MCF 10A (cell line): ENCODE measurements at regions of chr18 and their contacts with region 1.

Region 1: DNA sequence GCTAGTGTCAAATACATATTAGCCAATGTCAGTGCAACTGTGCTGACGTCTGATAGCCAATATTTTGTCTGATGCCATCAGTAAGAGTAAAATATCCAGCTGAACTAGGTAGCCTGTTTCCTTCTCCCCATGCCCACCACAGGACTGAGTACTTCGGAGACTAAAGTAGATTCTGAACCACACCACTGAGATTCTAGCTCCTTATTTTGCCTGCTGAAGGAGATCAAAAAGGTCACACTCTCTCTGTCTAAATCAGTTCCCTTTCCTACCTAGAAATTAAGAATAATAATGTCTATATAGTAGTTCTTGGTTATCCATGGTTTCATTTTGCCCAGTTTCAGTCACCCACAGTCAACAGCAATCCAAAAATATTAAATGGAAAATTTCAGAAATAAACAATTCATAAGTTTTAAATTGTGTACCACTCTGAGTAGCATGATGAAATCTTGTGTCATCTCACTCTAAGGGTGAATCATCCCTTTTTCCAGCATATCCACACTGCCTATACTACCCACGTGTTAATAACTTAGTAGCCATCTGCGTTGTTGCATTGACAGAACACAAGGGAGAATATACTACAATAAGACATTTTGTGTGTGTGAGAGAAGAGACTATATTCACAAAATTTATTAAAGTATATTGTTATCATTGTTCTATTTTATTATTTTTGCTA is 1043.3 kb upstream of the PIK3C3 start:
- DNase-seq: peak; percentile 68
- H3K4me3 Mint-ChIP-seq: no peak overlapping the region
- H3K27ac Mint-ChIP-seq: peak overlapping the region; percentile 98
- H3K4me1 Mint-ChIP-seq: peaks cover 10% of the 10 kb centered on the region
- H3K27me3 Mint-ChIP-seq: no peaks in the 10 kb centered on the region
- CTCF ChIP-seq: no peak

Region 2: DNA sequence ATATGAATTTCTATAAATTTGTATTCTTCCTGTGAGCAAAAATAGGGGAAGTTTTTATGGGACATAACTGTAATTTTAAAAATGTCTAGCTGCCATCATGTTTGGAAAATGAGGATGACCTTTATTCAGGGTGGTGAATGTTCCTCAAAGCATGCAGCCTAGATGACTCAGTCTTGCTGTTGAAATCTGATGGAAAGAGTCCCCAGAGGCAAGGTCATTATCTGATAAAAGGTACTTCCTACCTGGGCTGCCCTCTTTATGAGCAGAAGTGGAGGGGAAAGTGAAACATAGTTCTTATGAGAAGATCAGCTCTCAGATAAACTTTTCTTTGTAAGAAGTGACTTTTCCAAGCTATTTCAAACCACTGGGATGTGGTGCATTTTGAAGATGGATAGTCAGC is 101.3 kb before region 1 on chr18:
- CTCF ChIA-PET with region 1: no interaction called
- POLR2A ChIA-PET with region 1: no interaction called
- intact Hi-C with region 1: no loop called
- DNase-seq: peak; percentile 53
- H3K4me3 Mint-ChIP-seq: no peak overlapping the region
- H3K27ac Mint-ChIP-seq: no peak overlapping the region
- H3K4me1 Mint-ChIP-seq: peaks cover 14% of the 10 kb centered on the region
- H3K27me3 Mint-ChIP-seq: no peaks in the 10 kb centered on the region
- CTCF ChIP-seq: no peak

Region 3: DNA sequence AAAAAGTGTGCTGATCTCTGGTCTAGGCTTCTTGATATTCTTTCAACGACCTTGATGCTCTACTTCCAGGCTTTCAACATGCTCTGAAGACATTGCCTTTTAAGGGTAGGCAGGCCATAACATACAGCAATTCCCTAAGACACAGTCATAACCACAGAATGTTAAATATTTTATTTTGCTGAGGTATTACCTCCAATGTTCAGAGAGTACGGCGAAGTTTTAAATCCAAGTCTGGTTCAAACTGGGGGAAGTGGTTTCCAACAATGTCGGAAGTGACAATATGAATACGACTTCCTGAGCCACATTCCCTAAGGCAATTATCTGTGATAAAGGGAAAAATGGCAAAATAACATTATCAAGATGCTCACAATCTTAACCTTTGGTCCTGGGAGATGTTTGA is 34.6 kb before region 1 on chr18:
- CTCF ChIA-PET with region 1: no interaction called
- POLR2A ChIA-PET with region 1: no interaction called
- intact Hi-C with region 1: loop called (anchors 5 kb)
- DNase-seq: peak; percentile 51
- H3K4me3 Mint-ChIP-seq: no peak overlapping the region
- H3K27ac Mint-ChIP-seq: peak overlapping the region; percentile 97
- H3K4me1 Mint-ChIP-seq: peaks cover 17% of the 10 kb centered on the region
- H3K27me3 Mint-ChIP-seq: no peaks in the 10 kb centered on the region
- CTCF ChIP-seq: no peak

Region 4: DNA sequence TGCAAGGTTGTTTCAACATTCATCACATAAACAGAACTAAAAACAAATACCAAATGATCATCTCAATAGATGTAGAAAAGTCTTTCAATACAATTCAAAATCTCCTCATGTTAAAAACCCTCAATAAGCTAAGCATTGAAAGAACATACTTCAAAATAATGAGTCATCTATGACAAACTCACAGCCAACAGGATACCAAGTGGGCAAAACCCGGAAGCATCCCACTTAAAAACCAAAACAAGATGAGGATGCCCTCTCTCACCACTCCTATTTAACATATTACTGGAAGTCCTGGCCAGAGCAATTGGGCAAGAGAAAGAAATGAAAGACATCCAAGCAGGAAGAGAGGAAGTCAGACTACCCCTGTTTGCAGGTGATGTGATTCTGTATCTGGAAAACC is 51.1 kb after region 1 on chr18:
- CTCF ChIA-PET with region 1: no interaction called
- POLR2A ChIA-PET with region 1: no interaction called
- intact Hi-C with region 1: no loop called
- DNase-seq: peak; percentile 55
- H3K4me3 Mint-ChIP-seq: no peak overlapping the region
- H3K27ac Mint-ChIP-seq: peak overlapping the region; percentile 18
- H3K4me1 Mint-ChIP-seq: peaks cover 7% of the 10 kb centered on the region
- H3K27me3 Mint-ChIP-seq: no peaks in the 10 kb centered on the region
- CTCF ChIP-seq: no peak

Region 5: GRCh38 chr18:40984856-40985255 is 73.1 kb after region 1 on chr18:
- CTCF ChIA-PET with region 1: no interaction called
- POLR2A ChIA-PET with region 1: no interaction called
- intact Hi-C with region 1: loop called (anchors 10 kb)
- DNase-seq: peak; percentile 88
- H3K4me3 Mint-ChIP-seq: peak overlapping the region; percentile 16
- H3K27ac Mint-ChIP-seq: peak overlapping the region; percentile 93
- H3K4me1 Mint-ChIP-seq: peaks cover 35% of the 10 kb centered on the region
- H3K27me3 Mint-ChIP-seq: no peaks in the 10 kb centered on the region
- CTCF ChIP-seq: no peak